A549 (cell line): ENCODE measurements at regions of chr9 and their contacts with region 1.

Region 1: DNA sequence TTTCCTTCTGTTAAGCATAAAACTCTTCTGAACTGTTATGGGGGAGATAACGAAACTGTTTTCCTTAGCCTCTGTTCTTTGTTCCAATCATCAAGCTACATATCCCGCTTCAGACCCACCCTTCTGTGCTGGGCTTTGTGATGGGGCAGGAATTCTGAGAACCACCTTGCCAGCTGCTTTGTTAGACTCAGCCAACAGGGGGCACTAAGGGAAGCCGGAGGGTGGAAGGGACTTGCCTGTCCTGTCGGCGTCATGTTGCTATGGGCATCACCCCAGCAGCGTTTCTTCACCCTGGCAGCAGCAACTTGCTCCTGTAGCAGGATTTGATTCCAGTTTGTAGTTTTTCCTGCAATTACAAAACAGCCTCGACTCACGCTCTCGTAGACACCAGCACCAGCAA is 169.1 kb downstream of the CAAP1 start:
- DNase-seq: peak; percentile 44 to 70
- ATAC-seq: peak; percentile 96 to 99
- H3K4me3 ChIP-seq: no peak overlapping the region
- H3K27ac ChIP-seq: no peak overlapping the region
- H3K4me1 ChIP-seq: no peaks in the 10 kb centered on the region
- CTCF ChIP-seq: peak; percentile 51
- EP300 ChIP-seq: no peak
- POLR2A ChIP-seq: no peak
- RAD21 ChIP-seq: peak; percentile 32 to 47; a peak in 2 of 5 replicates

Region 2: DNA sequence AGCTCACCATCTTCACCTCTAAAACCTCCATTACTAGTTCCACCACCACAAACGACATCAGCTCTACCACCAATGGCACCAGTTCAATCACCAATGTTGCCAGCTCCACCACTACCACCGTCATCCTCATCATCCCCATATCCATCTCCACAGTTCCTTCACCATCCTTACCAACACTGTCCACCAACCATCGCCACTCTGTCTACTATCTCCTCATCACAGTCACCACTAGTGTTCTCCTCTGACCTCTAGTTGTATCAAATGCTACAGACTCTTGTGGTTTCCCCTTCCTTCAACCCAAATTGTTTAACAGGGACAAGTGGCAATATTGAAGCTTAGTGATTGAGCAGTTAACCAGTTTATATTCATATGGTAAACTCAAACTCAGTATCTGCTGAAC is 13.5 kb before region 1 on chr9:
- CTCF ChIA-PET with region 1: interaction called, 21 read pairs
- POLR2A ChIA-PET with region 1: no interaction called
- DNase-seq: no peak
- ATAC-seq: no peak
- H3K4me3 ChIP-seq: no peak overlapping the region
- H3K27ac ChIP-seq: no peak overlapping the region
- H3K4me1 ChIP-seq: no peaks in the 10 kb centered on the region
- CTCF ChIP-seq: no peak
- EP300 ChIP-seq: no peak
- POLR2A ChIP-seq: no peak
- RAD21 ChIP-seq: no peak